AG04450 (cell line): ENCODE measurements at regions of chr1 and their contacts with region 1.

Region 1: DNA sequence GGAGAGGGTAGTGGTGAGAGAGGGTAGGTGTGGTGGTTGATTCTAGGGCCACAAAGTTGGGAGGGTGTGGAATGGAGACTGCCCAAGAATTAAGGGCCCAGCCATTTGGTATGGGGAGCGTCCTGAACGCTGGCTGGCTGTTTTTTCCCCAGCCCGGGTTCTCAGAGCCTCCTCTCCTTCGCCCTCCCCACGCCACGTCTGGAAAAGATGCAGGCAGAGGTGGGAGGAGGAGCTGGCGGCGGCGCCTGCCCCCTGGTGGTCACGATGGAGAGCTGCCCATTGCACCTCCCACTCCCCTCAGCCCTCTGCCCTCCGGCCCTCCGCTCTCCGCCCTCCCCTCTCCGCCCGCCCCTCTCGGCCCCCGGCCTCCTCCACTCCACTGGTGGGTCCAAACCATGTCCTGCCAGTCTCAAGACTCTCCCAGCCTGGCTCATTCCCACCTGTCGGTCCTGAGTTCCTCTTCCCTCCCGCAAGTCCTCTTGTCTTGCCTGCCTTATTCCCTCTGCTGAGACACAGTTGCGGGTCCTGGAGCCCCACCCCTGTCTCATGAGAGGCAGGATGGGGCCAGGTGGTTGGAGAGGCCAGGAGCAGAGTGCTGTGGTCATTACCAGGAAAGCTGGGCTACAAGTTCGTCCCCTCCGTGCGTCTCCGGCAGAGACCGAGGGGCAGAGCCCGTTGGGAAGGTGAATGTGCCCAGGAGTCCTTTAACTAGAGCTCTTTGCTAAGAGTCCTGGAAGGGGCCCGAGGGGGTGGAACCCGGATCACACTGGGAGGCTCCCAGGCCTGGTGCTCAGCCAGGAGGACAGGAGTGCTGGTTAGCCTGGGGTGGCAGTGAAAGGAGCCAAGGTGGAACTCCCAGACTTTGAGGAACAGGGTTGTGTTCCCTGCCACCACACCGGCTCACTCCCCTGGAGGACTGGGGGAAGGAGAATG is 22.6 kb downstream of the ETNK2 start:
- DNase-seq: peak; percentile 32
- H3K4me3 ChIP-seq: no peak overlapping the region
- H3K27ac ChIP-seq: no peak overlapping the region
- H3K27me3 ChIP-seq: no peaks in the 10 kb centered on the region
- CTCF ChIP-seq: peak; percentile 85

Region 2: GRCh38 chr1:203835494-203835893 is 293.7 kb before region 1 on chr1:
- CTCF ChIA-PET with region 1: interaction called, 10 read pairs
- POLR2A ChIA-PET with region 1: no interaction called
- DNase-seq: no peak
- H3K4me3 ChIP-seq: no peak overlapping the region
- H3K27ac ChIP-seq: no peak overlapping the region
- H3K27me3 ChIP-seq: no peaks in the 10 kb centered on the region
- CTCF ChIP-seq: no peak

Region 3: GRCh38 chr1:203861379-203862184 is 267.6 kb before region 1 on chr1 and contains the start of gene SNRPE:
- CTCF ChIA-PET with region 1: interaction called, 479 read pairs
- POLR2A ChIA-PET with region 1: interaction called, 5 read pairs
- DNase-seq: peak; percentile 97
- H3K4me3 ChIP-seq: peak within 1 kb of the TSS; percentile 98
- H3K27ac ChIP-seq: peak within 1 kb of the TSS; percentile 73
- H3K27me3 ChIP-seq: no peaks in the 10 kb centered on the region
- CTCF ChIP-seq: peak; percentile 95
- polyA plus RNA-seq, gene SNRPE: 227 and 278 TPM in 2 replicates

Region 4: DNA sequence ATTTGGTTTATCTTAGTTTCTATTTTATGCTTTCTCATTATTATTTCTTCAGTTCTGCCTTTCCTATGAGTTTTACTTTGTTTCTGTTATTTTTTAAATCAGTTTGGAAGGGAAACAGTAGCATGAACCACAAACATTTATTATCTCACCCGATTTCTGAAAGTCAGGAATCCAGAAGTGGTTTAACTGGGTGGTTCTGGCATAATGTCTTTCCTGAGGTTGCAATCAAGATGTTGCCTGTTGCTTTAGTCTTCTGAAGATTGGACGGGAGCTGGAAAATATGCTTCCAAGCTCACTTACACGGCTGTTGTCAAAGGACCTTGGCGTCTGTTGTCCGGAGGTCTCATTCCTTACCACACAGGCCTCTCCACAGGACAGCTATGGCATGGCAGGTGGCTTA is 217.4 kb before region 1 on chr1:
- CTCF ChIA-PET with region 1: interaction called, 10 read pairs
- POLR2A ChIA-PET with region 1: interaction called, 8 read pairs
- DNase-seq: no peak
- H3K4me3 ChIP-seq: no peak overlapping the region
- H3K27ac ChIP-seq: no peak overlapping the region
- H3K27me3 ChIP-seq: no peaks in the 10 kb centered on the region
- CTCF ChIP-seq: no peak

Region 5: DNA sequence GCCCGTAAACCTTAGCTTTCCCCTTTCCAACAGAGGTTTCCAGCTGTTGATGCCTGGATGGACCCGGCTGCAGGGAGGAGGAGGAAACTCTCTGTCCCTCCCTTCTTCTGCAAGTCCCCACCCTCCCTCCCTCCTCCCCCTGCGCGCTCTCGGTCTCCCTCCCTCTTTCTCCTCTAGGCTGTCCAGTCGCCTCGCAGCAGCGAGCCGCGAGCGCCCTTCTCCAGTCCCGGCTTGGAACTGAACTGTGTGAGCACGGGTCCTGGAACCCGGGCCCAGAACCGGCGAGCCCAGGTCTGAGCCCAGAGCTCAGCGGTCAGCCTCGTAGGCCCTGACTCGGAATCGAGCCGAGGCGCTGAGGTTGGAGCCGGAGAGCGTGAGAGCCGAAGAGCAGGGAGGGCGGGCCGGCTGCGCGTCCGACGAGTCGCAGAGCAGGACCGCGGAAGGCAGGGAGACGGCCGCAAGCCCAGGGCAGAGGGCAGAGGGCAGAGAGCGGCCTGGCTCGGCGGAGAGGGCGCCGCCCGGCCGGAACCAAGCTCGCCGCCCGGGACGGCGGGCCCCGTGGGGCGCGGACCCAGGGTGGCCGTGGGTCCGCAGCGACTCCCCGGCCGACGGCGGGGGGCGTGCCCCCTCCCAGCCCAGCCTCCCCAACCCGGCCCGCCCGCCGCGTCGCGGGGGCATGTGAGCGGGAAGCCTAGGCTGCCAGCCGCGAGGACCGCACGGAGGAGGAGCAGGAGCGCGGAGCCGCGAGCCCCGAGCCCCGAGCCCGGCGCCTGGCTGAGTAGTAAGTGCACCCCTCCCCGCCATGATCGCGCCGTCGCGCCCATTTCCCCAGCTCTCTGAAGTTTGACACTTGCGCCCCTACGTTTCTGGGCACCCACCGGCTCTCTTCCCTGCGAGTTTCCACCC is 56.0 kb before region 1 on chr1 and contains the start of gene SOX13:
- CTCF ChIA-PET with region 1: interaction called, 11 read pairs
- POLR2A ChIA-PET with region 1: interaction called, 3 read pairs
- DNase-seq: peak; percentile 61
- H3K4me3 ChIP-seq: peak within 1 kb of the TSS; percentile 74
- H3K27ac ChIP-seq: no peak within 1 kb of the TSS
- H3K27me3 ChIP-seq: peaks cover 20% of the 10 kb centered on the region
- CTCF ChIP-seq: peak; percentile 22; the same call in 1 of the 2 replicates
- polyA plus RNA-seq, gene SOX13: 1.8 and 2.0 TPM in 2 replicates

Region 6: GRCh38 chr1:204114606-204115005 is 14.6 kb before region 1 on chr1:
- CTCF ChIA-PET with region 1: interaction called, 29 read pairs
- POLR2A ChIA-PET with region 1: no interaction called
- DNase-seq: no peak
- H3K4me3 ChIP-seq: no peak overlapping the region
- H3K27ac ChIP-seq: no peak overlapping the region
- H3K27me3 ChIP-seq: no peaks in the 10 kb centered on the region
- CTCF ChIP-seq: no peak